ENCODE measurements at regions of chr3 and their contacts with region 1.

Region 1: GRCh38 chr3:149657926-149658733 is at the start of gene WWTR1:
- DNase-seq: peak; percentile 99
- H3K4me3 Mint-ChIP-seq: peak within 1 kb of the TSS; percentile 91
- H3K27ac Mint-ChIP-seq: peak within 1 kb of the TSS; percentile 92
- H3K4me1 Mint-ChIP-seq: peaks cover 37% of the 10 kb centered on the region
- H3K27me3 Mint-ChIP-seq: no peaks in the 10 kb centered on the region
- CTCF ChIP-seq: no peak
- total RNA-seq, gene WWTR1: 202 and 269 TPM in 2 replicates

Region 2: DNA sequence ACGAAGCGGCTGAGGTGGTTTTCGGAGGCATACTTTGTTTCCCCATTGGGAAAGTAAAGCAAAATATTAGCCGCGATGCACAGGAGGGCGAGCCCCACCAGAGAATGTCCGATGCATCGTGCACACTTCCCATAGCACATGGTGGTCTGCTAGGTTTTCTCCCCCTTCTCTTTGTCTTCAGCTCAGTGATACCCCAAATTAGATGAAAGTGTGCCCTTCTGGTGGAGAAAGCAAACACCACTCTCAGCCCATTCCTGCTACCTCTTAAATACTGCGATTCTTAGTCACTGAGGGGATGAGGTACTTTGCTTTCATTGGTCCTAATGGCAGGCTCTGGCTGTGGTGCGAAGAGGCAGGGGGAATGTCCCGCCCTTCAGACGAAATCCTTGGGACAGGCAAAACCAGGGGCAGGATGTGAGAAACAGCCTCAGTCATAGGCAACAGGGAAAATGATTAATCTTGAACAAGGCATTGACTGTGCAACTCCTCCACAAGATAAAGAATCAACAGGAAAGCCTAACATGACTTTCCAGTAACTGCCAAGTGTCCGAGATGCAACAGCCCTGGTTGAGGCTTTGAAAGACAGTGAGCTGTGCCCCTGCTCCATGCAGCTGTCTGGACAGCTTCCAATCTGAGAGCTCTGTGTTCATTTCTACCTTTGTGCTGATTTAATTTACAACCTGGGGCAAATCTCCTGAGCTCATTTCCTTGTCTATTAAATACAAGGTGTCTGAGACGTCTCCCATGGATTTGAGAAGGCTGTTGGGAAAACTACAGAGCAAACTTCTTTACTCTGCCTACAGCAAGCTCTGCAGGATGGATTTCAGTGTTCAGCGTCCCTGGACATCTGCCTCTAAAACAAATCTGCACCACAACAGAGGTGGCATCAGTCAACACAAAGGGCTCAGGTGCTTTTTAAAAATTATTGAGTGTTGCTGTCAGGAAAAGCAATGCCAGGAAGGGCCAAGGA is 280.4 kb before region 1 on chr3 and contains the start of gene TM4SF1:
- CTCF ChIA-PET with region 1: no interaction called
- intact Hi-C with region 1: loop called (anchors 10 kb)
- DNase-seq: peak; percentile 97
- H3K4me3 Mint-ChIP-seq: peak within 1 kb of the TSS; percentile 75
- H3K27ac Mint-ChIP-seq: peak within 1 kb of the TSS; percentile 95
- H3K4me1 Mint-ChIP-seq: peaks cover 57% of the 10 kb centered on the region
- H3K27me3 Mint-ChIP-seq: no peaks in the 10 kb centered on the region
- CTCF ChIP-seq: peak; percentile 19
- total RNA-seq, gene TM4SF1: 919 and 981 TPM in 2 replicates

Region 3: GRCh38 chr3:149575961-149576564 is 82.1 kb before region 1 on chr3:
- CTCF ChIA-PET with region 1: interaction called, 10 read pairs
- intact Hi-C with region 1: loop called (anchors 5 kb)
- DNase-seq: peak; percentile 61
- H3K4me3 Mint-ChIP-seq: peak overlapping the region; percentile 32
- H3K27ac Mint-ChIP-seq: peak overlapping the region; percentile 92
- H3K4me1 Mint-ChIP-seq: peaks cover 98% of the 10 kb centered on the region
- H3K27me3 Mint-ChIP-seq: no peaks in the 10 kb centered on the region
- CTCF ChIP-seq: no peak

Region 4: DNA sequence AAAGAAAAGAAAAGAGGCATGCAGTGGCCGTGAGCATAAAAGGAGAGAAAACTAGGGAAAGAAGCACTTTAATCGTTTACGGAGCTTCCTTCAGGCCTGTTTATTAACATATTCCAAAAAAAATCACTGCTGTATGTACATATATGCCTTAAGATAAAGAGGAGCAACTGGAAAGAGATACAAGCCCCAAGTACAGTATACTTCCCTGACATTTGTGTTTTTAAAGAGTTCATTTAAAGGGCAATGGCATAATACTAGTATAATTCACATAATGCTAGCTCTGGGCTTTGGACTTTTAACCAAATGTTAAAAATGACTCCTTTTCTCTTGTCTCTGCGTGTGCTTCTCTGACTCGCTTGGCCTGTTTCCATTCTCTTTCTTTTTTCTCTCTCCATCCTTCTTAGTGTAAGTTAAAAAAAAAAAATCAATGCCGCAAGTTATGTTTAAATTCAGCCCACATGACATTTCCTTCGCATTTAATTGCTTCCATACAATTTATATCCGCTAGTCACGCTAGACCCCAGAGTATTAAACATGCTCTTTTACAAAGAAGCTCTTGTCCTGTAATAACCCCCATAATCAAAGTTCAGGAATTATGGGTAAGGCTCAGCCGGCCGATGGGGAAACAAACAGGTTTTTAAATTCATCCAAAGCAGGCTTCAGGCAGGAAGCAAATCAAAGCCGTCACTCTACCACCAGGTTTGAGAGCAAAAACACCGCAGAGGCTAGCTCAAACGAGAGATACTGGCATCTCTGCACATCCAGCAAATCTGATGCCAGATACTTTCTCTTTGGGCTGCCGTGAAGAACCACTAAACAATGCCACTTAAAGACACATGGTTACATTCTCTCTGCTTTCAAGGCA is 19.7 kb before region 1 on chr3:
- CTCF ChIA-PET with region 1: interaction called, 7 read pairs
- intact Hi-C with region 1: loop called (anchors 2 kb)
- DNase-seq: peak; percentile 65
- H3K4me3 Mint-ChIP-seq: peak overlapping the region; percentile 60
- H3K27ac Mint-ChIP-seq: peak overlapping the region; percentile 78
- H3K4me1 Mint-ChIP-seq: peaks cover 86% of the 10 kb centered on the region
- H3K27me3 Mint-ChIP-seq: no peaks in the 10 kb centered on the region
- CTCF ChIP-seq: no peak

Region 5: DNA sequence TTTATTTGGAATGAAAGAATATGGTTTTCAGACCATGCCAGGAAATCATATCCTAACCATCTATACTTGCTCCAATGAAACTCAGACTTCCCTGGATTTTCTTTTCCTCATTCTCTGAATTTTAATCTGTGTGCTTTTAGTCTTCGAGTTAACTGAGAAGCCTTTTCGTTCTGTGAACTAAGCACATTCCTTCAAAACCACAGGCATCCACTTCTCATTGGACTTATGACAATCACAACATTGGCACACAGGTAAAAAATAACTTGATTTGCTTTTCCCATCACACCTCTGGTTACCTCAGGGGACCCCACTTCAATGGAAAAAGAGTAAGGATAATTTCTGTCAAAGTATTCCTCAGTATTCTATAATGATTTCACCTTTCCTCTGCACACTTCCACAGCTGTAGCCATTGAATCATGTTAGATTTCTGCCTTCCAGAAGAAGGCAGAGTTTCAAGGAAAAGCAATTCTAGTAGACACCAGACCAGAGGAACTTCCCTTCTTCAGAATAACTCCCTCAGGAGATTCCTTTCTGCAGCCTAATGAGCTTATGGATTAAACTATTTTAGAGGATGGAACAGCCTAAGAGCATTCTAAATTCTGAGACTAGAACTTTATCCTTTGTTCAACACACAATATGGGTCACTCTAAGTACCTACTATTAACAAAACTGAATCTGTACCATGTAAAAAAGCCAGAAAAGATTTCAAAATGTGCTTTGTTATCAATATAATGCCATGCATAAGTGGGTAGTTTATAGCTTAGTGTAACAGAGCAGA is 78.2 kb after region 1 on chr3:
- CTCF ChIA-PET with region 1: no interaction called
- intact Hi-C with region 1: loop called (anchors 5 kb)
- DNase-seq: peak; percentile 58
- H3K4me3 Mint-ChIP-seq: no peak overlapping the region
- H3K27ac Mint-ChIP-seq: peak overlapping the region; percentile 30
- H3K4me1 Mint-ChIP-seq: peaks cover 27% of the 10 kb centered on the region
- H3K27me3 Mint-ChIP-seq: no peaks in the 10 kb centered on the region
- CTCF ChIP-seq: no peak

Measured in Calu3 (cell line).